CD4-positive, alpha-beta memory T cell (primary cell): ENCODE measurements at regions of chr1 and their contacts with region 1.

Region 1: DNA sequence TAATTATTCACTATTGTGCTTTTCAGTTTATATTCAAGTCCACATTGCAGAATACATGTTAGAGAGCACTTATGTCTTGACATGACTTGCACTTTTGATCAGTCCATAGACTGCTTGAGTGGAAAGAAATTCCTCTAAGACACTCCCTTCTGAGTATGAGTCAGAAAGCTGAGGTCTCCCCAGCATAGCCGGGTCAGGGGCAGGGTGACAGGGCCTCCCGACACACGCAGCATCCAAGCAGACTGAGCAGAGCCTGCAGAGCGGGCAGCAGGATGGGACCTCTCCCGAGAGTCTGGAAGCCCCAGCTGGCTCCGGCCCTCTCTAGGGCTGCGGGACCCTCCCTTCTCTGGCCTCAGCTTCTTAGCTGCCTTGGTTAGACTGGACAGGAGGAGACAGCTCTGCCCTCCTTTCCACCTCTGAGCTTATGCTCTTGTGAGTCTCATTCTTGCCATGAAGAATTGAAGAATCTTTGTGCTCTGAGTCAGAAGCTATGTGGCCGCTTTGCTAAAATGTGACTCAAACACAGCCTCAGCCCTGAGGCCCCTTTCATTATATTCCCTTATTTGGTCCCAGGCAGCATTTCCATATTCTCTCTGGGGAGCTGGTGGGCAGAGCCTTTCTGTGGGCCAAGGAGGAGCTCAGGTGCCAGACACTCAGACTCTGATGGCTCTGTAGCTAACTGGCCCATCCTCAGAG is 11.2 kb upstream of the CAPN2 start:
- DNase-seq: no peak
- H3K4me3 ChIP-seq: no peak overlapping the region
- H3K4me3 Mint-ChIP-seq: no peak overlapping the region
- H3K27ac ChIP-seq: no peak overlapping the region
- H3K27ac Mint-ChIP-seq: peak overlapping the region in 1 of 7 donors; percentile 41
- H3K4me1 ChIP-seq: peaks cover 7% of the 10 kb centered on the region
- H3K4me1 Mint-ChIP-seq: peaks cover 4 to 13% (median 7%) of the 10 kb centered on the region in 4 donors
- H3K27me3 ChIP-seq: no peaks in the 10 kb centered on the region
- H3K27me3 Mint-ChIP-seq: peaks cover 2 to 5% of the 10 kb centered on the region in 2 donors

Region 2: GRCh38 chr1:223712194-223712849 is 11.2 kb after region 1 on chr1 and contains the start of gene CAPN2:
- CTCF ChIA-PET with region 1: interaction called, 11 read pairs
- POLR2A ChIA-PET with region 1: interaction called, 4 read pairs
- intact Hi-C with region 1: loop called (anchors 2 kb)
- DNase-seq: peak; percentile 54 to 67 (median 62)
- H3K4me3 ChIP-seq: peak within 1 kb of the TSS; percentile 53 to 74
- H3K4me3 Mint-ChIP-seq: peak within 1 kb of the TSS; percentile 86 to 95 (median 88)
- H3K27ac ChIP-seq: peak within 1 kb of the TSS; percentile 79
- H3K27ac Mint-ChIP-seq: peak within 1 kb of the TSS; percentile 91 to 98 (median 94)
- H3K4me1 ChIP-seq: peaks cover 61% of the 10 kb centered on the region
- H3K4me1 Mint-ChIP-seq: peaks cover 50 to 75% (median 58%) of the 10 kb centered on the region in 4 donors
- H3K27me3 ChIP-seq: no peaks in the 10 kb centered on the region
- H3K27me3 Mint-ChIP-seq: no peaks in the 10 kb centered on the region
- total RNA-seq, gene CAPN2: 178 to 180 TPM

Region 3: DNA sequence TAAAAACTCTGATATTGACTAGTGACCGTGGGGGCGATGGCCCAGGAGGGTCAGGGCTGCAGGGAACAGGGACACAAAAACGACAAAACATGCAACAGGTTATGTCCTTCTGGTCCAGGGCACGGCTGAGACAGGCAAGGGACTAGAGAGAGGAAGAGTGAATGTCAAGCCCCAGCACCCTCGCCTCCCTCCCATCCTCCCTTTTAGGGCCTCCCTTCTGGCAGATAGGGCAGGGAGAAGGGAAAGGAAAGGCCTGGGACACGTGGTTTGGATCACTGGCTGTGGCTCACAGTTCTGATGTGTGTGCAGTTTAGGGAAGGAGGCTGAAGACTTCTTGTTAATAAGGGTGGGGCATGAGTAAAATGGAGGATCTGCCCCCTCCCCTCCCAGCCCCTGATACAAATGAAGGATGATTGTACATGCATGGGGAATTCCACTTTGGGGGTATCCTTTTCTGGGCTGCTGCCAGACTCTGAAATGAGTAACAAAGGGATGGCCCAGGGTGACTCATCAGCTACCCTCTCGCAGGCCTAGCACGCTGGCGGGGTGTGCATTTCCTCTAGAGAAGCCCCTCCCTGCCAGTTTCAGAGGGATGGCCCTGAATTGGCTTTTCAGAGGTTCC is 25.4 kb after region 1 on chr1:
- CTCF ChIA-PET with region 1: interaction called, 15 read pairs
- POLR2A ChIA-PET with region 1: no interaction called
- intact Hi-C with region 1: no loop called
- DNase-seq: peak; percentile 68 to 98 (median 78)
- H3K4me3 ChIP-seq: peak overlapping the region in 1 of 2 donors; percentile 20
- H3K4me3 Mint-ChIP-seq: peak overlapping the region; percentile 70 to 92 (median 82)
- H3K27ac ChIP-seq: peak overlapping the region; percentile 85
- H3K27ac Mint-ChIP-seq: peak overlapping the region; percentile 85 to 99 (median 95)
- H3K4me1 ChIP-seq: peaks cover 80% of the 10 kb centered on the region
- H3K4me1 Mint-ChIP-seq: peaks cover 55 to 94% (median 74%) of the 10 kb centered on the region in 4 donors
- H3K27me3 ChIP-seq: no peaks in the 10 kb centered on the region
- H3K27me3 Mint-ChIP-seq: no peaks in the 10 kb centered on the region

Region 4: DNA sequence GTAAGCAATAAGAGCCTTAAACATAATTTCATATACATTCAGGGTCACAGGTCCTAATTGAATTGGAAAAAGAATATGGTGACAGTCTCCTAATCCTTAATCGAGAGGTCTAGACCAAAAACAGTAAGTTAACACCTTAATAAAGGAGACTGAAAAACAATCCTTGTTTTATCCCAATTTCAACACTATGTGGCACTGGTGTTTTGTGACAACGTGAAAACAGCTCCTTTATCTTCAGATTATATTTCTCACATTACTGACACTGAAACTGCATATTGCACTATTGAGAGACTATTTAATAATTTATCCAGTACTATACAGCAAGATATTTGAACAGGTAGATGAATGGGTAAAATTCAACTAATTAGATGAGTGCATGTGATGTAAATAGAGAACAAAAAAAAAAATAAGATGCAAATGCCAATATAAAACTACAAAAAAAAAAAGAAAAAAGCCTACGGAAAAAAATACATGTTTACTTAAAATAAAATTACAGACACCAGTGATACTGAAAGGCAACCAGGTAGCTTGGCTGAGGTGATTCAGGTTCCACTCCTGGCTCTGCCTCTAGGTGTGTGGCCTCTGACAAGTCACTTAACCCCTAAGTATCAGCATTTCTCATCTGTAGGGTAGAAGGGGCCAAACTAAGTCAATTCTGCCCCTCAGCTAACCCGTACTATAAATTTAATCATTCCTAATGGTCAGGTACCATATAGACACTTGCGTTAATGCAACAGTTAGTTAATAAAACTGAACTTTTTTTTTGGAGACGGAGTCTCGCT is 110.7 kb after region 1 on chr1:
- CTCF ChIA-PET with region 1: interaction called, 3 read pairs
- POLR2A ChIA-PET with region 1: no interaction called
- intact Hi-C with region 1: loop called (anchors 2 kb)
- DNase-seq: peak in 4 of 5 donors; percentile 40 to 51 (median 47)
- H3K4me3 ChIP-seq: no peak overlapping the region
- H3K4me3 Mint-ChIP-seq: no peak overlapping the region
- H3K27ac ChIP-seq: no peak overlapping the region
- H3K27ac Mint-ChIP-seq: peak overlapping the region in 3 of 7 donors; percentile 27 to 72 (median 57)
- H3K4me1 ChIP-seq: peaks cover 17% of the 10 kb centered on the region
- H3K4me1 Mint-ChIP-seq: peaks cover 23 to 37% (median 32%) of the 10 kb centered on the region in 4 donors
- H3K27me3 ChIP-seq: no peaks in the 10 kb centered on the region
- H3K27me3 Mint-ChIP-seq: no peaks in the 10 kb centered on the region

Region 5: GRCh38 chr1:224052772-224053171 is 351.7 kb after region 1 on chr1:
- CTCF ChIA-PET with region 1: interaction called, 10 read pairs
- POLR2A ChIA-PET with region 1: no interaction called
- intact Hi-C with region 1: loop called (anchors 1 kb)
- DNase-seq: no peak
- H3K4me3 ChIP-seq: no peak overlapping the region
- H3K4me3 Mint-ChIP-seq: no peak overlapping the region
- H3K27ac ChIP-seq: no peak overlapping the region
- H3K27ac Mint-ChIP-seq: no peak overlapping the region
- H3K4me1 ChIP-seq: peaks cover 5% of the 10 kb centered on the region
- H3K4me1 Mint-ChIP-seq: peaks cover 0 to 3% (median 1%) of the 10 kb centered on the region in 4 donors
- H3K27me3 ChIP-seq: no peaks in the 10 kb centered on the region
- H3K27me3 Mint-ChIP-seq: peaks cover 12 to 14% of the 10 kb centered on the region in 2 donors